Activated naive CD8-positive, alpha-beta T cell treated with anti-CD3 and anti-CD28 coated beads, Interleukin-2, amount 10 ng/mL, durations not matched to agents 7 days and 5 days (primary cell): ENCODE measurements at regions of chr17 and their contacts with region 1.

Region 1: DNA sequence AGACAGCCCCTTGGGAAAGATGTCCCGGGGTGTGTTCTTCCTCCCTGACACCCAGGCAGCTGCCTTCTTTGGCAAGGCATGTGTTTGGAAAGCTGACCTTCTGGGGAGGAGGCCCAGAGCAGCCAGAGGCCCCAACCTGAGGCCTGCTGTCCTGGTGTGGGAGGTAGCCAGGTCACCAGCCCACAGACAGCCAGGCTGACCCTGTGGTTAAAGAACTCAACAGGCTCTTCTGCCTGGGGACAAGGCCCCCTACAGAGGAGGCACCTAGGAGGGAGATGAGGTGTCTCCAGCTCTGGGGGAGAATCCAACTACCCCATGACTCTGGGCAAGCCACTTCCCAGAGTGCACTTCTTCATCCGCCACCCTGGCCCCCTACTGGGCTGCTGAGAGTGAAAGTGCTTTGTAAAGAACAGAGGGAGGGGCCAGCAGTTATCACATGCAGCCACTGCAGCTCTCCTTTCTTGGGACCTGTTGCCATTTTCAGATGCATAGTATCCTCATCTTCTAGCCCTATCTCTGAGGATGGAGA is 13.1 kb upstream of the SREBF1 start:
- DNase-seq: peak; percentile 82
- ATAC-seq: peak; percentile 70
- H3K4me3 Mint-ChIP-seq: peak overlapping the region; percentile 71
- H3K27ac Mint-ChIP-seq: peak overlapping the region; percentile 94
- H3K4me1 Mint-ChIP-seq: peaks cover 67% of the 10 kb centered on the region
- H3K27me3 Mint-ChIP-seq: no peaks in the 10 kb centered on the region

Region 2: GRCh38 chr17:17681187-17681848 is 168.6 kb before region 1 on chr17 and contains the start of gene RAI1:
- POLR2A ChIA-PET with region 1: interaction called, 14 read pairs
- DNase-seq: peak; percentile 91
- ATAC-seq: peak; percentile 63
- H3K4me3 Mint-ChIP-seq: peak within 1 kb of the TSS; percentile 90
- H3K27ac Mint-ChIP-seq: peak within 1 kb of the TSS; percentile 90
- H3K4me1 Mint-ChIP-seq: peaks cover 36% of the 10 kb centered on the region
- H3K27me3 Mint-ChIP-seq: peaks cover 6% of the 10 kb centered on the region
- total RNA-seq, gene RAI1: 25.0 to 25.5 TPM

Region 3: GRCh38 chr17:17774009-17774881 is 75.7 kb before region 1 on chr17:
- POLR2A ChIA-PET with region 1: no interaction called
- DNase-seq: no peak
- ATAC-seq: no peak
- H3K4me3 Mint-ChIP-seq: no peak overlapping the region
- H3K27ac Mint-ChIP-seq: no peak overlapping the region
- H3K4me1 Mint-ChIP-seq: peaks cover 10% of the 10 kb centered on the region
- H3K27me3 Mint-ChIP-seq: no peaks in the 10 kb centered on the region

Region 4: GRCh38 chr17:17812211-17813057 is 37.5 kb before region 1 on chr17:
- POLR2A ChIA-PET with region 1: interaction called, 10 read pairs
- DNase-seq: peak; percentile 81
- ATAC-seq: peak; percentile 17
- H3K4me3 Mint-ChIP-seq: no peak overlapping the region
- H3K27ac Mint-ChIP-seq: peak overlapping the region; percentile 34
- H3K4me1 Mint-ChIP-seq: peaks cover 14% of the 10 kb centered on the region
- H3K27me3 Mint-ChIP-seq: no peaks in the 10 kb centered on the region

Region 5: DNA sequence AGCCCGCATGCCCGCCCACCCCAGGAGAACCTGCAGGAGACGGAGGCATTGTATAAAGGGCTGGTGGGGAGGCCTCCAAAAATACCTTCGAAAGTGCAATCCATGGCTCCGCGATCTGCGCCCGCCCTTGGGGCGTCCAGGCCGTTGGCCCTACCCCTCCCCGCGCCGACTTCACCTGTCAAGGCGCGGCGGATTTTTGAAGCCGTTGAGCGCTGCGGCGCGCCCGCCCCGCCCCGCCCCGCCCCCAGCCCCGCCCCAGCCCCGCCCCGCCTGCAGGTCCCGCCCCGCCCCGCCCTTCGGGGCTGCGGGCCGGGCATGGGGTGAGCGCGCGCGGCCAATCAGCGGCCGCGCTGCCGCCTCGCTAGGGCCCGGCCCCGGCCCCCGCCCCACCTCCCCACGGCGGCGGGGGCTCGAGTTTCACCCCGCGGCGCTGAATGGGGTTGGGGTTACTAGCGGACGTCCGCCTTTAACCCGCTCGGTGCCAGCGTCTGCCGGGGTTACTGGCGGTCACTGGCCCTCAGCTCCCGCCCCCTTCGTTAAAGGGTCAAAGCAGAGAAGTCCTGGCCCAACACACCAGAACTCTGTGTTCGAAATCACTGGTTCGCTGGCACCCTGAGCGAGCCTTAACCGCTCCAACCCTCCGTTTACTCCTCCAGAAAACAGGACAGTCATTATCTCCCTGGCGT is 26.3 kb before region 1 on chr17:
- POLR2A ChIA-PET with region 1: interaction called, 327 read pairs
- DNase-seq: peak; percentile 89
- ATAC-seq: peak; percentile 86
- H3K4me3 Mint-ChIP-seq: peak overlapping the region; percentile 91
- H3K27ac Mint-ChIP-seq: peak overlapping the region; percentile 94
- H3K4me1 Mint-ChIP-seq: peaks cover 80% of the 10 kb centered on the region
- H3K27me3 Mint-ChIP-seq: no peaks in the 10 kb centered on the region

Region 6: GRCh38 chr17:17836250-17836817 is 13.6 kb before region 1 on chr17:
- POLR2A ChIA-PET with region 1: interaction called, 327 read pairs
- DNase-seq: peak; percentile 99
- ATAC-seq: peak; percentile 68
- H3K4me3 Mint-ChIP-seq: peak overlapping the region; percentile 92
- H3K27ac Mint-ChIP-seq: peak overlapping the region; percentile 94
- H3K4me1 Mint-ChIP-seq: peaks cover 69% of the 10 kb centered on the region
- H3K27me3 Mint-ChIP-seq: no peaks in the 10 kb centered on the region